ENCODE measurements at regions of chr3 and their contacts with region 1.

Region 1: DNA sequence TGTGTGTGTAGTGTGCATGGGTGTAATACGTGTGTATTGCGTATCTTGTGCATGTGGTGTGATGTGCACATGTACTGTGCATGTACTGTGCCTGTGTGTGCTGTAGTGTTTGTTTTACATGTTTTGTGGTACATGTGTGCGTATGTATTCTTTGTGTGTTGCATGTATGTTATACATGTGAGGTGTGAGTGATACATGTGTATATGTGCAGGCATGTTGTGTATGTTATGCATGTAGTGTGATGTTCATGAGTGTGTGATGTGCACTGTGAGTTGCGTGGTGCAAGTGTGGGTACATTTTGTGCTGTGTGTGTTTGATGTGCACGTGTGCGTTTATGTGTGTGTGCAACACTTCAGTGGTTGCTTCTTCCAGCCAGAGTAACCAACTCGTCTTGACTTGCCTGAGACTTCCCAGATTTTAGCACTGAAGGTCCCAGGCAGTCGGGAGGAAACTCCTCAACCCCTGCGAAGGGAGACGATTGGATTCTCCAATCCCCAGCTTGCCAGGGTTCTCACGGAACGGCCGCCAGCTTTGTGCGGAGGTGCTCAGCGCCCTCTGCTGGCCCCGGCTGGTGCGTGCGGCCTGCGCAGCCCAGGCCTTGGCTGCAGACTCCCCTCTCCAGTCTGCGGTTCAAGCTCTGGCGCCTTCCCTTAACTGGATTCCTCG is 3.6 kb downstream of the GALNT15 start:
- DNase-seq: peak; percentile 35
- H3K4me3 ChIP-seq: no peak overlapping the region
- H3K27me3 ChIP-seq: no peaks in the 10 kb centered on the region
- CTCF ChIP-seq: peak; percentile 99

Region 2: GRCh38 chr3:14371573-14372474 is 1806.3 kb before region 1 on chr3:
- CTCF ChIA-PET with region 1: no interaction called
- POLR2A ChIA-PET with region 1: no interaction called
- DNase-seq: peak; percentile 51
- H3K4me3 ChIP-seq: no peak overlapping the region
- H3K27me3 ChIP-seq: peaks cover 1% of the 10 kb centered on the region; the same call in 1 of the 2 replicates
- CTCF ChIP-seq: peak; percentile 10; the same call in 1 of the 2 replicates

Region 3: DNA sequence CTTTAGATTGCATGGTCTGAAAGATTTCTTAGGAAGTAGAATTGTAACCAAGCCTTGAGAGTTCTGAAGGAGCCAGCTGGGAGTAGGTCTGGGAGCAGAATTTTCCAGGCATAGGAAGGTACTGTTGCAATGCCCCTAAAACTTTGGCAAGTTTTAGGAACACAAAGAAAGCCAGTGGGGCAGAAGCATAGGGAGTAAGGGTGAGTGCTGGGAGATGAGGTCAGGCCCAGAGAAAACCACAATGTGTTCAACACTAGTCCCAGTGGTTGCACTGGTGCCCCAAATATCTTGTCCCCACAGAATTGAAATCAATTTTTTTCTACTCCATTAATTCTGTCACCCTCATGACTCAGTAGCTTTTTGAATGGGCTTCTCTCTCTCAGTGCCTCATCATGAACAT is 124.3 kb before region 1 on chr3:
- CTCF ChIA-PET with region 1: interaction called, 171 read pairs
- POLR2A ChIA-PET with region 1: interaction called, 3 read pairs
- DNase-seq: no peak
- H3K4me3 ChIP-seq: no peak overlapping the region
- H3K27me3 ChIP-seq: no peaks in the 10 kb centered on the region
- CTCF ChIP-seq: no peak

Region 4: GRCh38 chr3:16060358-16060852 is 117.7 kb before region 1 on chr3:
- CTCF ChIA-PET with region 1: interaction called, 83 read pairs
- POLR2A ChIA-PET with region 1: interaction called, 6 read pairs
- DNase-seq: peak; percentile 99
- H3K4me3 ChIP-seq: no peak overlapping the region
- H3K27me3 ChIP-seq: no peaks in the 10 kb centered on the region
- CTCF ChIP-seq: peak; percentile 34

Region 5: DNA sequence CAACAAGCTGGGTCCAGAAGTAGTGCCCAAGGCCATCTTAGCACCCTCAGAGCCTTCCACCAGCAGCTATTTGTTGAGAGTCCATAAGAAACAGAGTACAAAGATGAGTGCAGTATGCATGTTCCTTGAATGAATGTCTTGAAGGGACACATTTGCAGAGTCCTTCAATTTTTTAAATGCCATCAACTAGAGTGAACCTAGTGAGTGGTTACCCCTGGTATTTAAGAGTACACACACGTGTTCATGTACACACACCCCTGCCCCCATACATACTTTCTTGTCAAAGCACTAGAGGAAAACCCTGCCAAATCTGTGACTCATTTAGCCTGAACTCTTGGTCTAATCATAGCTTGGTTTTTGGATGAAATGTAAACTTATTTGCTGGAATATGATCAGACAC is 88.1 kb before region 1 on chr3:
- CTCF ChIA-PET with region 1: interaction called, 10 read pairs
- POLR2A ChIA-PET with region 1: no interaction called
- DNase-seq: peak; percentile 91
- H3K4me3 ChIP-seq: no peak overlapping the region
- H3K27me3 ChIP-seq: no peaks in the 10 kb centered on the region
- CTCF ChIP-seq: no peak

Region 6: GRCh38 chr3:16124636-16125035 is 53.5 kb before region 1 on chr3:
- CTCF ChIA-PET with region 1: interaction called, 12 read pairs
- POLR2A ChIA-PET with region 1: interaction called, 9 read pairs
- DNase-seq: peak; percentile 95
- H3K4me3 ChIP-seq: no peak overlapping the region
- H3K27me3 ChIP-seq: no peaks in the 10 kb centered on the region
- CTCF ChIP-seq: no peak

Region 7: GRCh38 chr3:16240283-16241023 is 62.4 kb after region 1 on chr3:
- CTCF ChIA-PET with region 1: interaction called, 12 read pairs
- POLR2A ChIA-PET with region 1: interaction called, 3 read pairs
- DNase-seq: peak; percentile 42
- H3K4me3 ChIP-seq: no peak overlapping the region
- H3K27me3 ChIP-seq: no peaks in the 10 kb centered on the region
- CTCF ChIP-seq: no peak

Measured in BJ (cell line).